ENCODE measurements at regions of chr1 and their contacts with region 1.

Region 1: GRCh38 chr1:151146412-151147140 is at the start of gene SEMA6C:
- DNase-seq: peak; percentile 97 to 98
- ATAC-seq: peak; percentile 52 to 66
- H3K4me3 ChIP-seq: peak within 1 kb of the TSS; percentile 89 to 97 (median 92)
- H3K27ac ChIP-seq: peak within 1 kb of the TSS; percentile 95 to 99 (median 98)
- H3K4me1 ChIP-seq: peaks cover 40 to 48% of the 10 kb centered on the region in 2 donors
- H3K27me3 ChIP-seq: no peaks in the 10 kb centered on the region
- CTCF ChIP-seq: peak in 1 of 5 experiments; percentile 8
- POLR2A ChIP-seq: peak; percentile 97 to 98
- total RNA-seq, gene SEMA6C: 51.5 to 121 (median 108) TPM

Region 2: DNA sequence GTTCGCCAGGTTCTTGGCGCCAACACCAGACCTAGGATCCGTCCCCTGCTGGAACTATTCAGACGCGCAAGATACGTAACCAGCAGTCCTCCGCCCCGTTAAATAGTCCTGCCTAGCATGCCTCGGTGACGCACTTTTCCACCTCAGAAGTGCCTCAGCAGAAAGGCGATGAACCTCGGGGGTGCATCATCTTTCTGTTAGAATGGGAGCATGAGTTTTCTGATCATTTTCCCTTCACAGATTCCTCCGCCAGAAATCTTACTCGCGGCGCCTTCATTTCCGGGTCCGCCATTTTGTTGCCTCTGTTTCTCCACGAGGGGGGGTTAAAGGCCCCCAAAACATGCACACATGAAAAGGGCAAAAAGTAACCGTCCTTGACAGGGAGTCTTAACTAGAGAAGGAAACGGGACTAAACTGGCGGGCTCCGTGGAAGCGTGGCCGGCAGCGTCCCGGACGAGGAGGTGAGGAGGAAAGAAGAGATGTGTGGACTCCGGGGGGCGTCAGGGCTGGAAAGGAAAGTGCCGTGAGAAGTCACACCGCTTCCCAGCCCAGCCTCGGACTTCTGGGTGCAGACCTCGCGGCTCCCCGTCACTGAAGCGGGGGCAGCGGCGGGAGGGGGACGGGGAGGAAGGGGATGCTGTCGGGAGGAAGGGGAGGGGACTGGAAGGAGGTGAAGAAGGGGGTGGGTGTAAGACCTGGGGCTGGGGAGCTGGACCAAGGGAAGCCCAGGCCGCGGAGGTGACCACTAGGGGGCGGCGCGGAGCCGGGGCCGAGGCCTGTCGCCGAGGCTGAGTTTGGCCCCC is 75.9 kb before region 1 on chr1 and contains the start of gene GABPB2:
- in situ Hi-C with region 1: no loop called
- intact Hi-C with region 1: loop called (anchors 2 kb)
- DNase-seq: peak; percentile 88 to 94
- ATAC-seq: peak; percentile 91
- H3K4me3 ChIP-seq: peak within 1 kb of the TSS; percentile 85 to 96 (median 92)
- H3K27ac ChIP-seq: peak within 1 kb of the TSS; percentile 94 to 99 (median 98)
- H3K4me1 ChIP-seq: peaks cover 9 to 19% of the 10 kb centered on the region in 2 donors
- H3K27me3 ChIP-seq: no peaks in the 10 kb centered on the region
- CTCF ChIP-seq: peak; percentile 57 to 94 (median 90)
- POLR2A ChIP-seq: peak; percentile 43 to 50
- total RNA-seq, gene GABPB2: 11.9 to 20.5 (median 17.9) TPM

Region 3: DNA sequence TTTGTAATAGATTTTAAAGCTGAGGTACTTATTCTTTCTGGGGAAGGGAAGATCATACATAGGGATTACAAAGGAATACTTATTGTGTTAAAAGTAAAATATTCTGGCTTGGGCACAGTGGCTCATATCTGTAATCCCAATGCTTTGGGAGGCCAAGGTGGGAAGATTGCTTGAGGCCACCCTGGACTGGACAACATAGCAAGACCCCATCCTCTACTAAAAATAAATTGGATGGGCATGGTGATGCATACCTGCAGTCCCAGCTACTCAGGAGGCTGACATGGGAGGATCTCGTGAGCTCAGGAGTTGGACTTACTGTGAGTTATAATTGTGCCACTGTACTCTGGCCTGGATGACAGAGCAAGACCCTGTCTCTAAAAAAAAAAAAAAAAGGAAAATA is 48.5 kb before region 1 on chr1:
- in situ Hi-C with region 1: loop called in 2 of 4 experiments (anchors 5 to 10 kb)
- intact Hi-C with region 1: no loop called
- DNase-seq: no peak
- ATAC-seq: no peak
- H3K4me3 ChIP-seq: no peak overlapping the region
- H3K27ac ChIP-seq: no peak overlapping the region
- H3K4me1 ChIP-seq: no peaks in the 10 kb centered on the region
- H3K27me3 ChIP-seq: no peaks in the 10 kb centered on the region
- CTCF ChIP-seq: no peak
- POLR2A ChIP-seq: no peak

Region 4: DNA sequence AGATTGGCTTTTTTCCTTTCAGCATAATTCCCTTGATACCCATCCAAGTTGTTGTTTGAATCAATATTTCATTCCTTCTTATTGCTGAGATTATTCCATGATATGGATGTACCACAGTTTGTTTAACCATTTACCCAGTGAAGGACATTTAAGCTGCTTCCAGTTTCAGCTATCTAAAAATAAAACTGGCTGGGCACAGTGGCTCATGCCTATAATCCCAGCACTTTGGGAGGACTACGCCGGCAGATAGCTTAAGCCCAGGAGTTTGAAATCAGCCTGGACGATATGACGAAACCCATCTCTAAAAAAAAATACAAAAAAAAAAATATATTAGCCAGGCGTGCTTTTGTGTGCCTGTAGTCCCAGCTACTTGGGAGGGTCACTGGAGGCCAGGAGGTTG is 32.7 kb before region 1 on chr1:
- in situ Hi-C with region 1: loop called in 1 of 4 experiments (anchors 10 kb)
- intact Hi-C with region 1: loop called (anchors 5 kb)
- DNase-seq: no peak
- ATAC-seq: peak; percentile 50 to 59
- H3K4me3 ChIP-seq: no peak overlapping the region
- H3K27ac ChIP-seq: peak overlapping the region in 2 of 4 donors; percentile 20 to 46
- H3K4me1 ChIP-seq: peaks cover 0 to 8% of the 10 kb centered on the region in 2 donors
- H3K27me3 ChIP-seq: no peaks in the 10 kb centered on the region
- CTCF ChIP-seq: no peak
- POLR2A ChIP-seq: no peak

Region 5: GRCh38 chr1:151165738-151166505 is 19.3 kb after region 1 on chr1 and contains the starts of genes LYSMD1 and SCNM1:
- in situ Hi-C with region 1: no loop called
- intact Hi-C with region 1: loop called (anchors 1 kb)
- DNase-seq: peak; percentile 97 to 98
- ATAC-seq: peak; percentile 81 to 85
- H3K4me3 ChIP-seq: peak within 1 kb of the TSS; percentile 82 to 97 (median 84)
- H3K27ac ChIP-seq: peak within 1 kb of the TSS; percentile 91 to 99 (median 91)
- H3K4me1 ChIP-seq: peaks cover 50 to 54% of the 10 kb centered on the region in 2 donors
- H3K27me3 ChIP-seq: no peaks in the 10 kb centered on the region
- CTCF ChIP-seq: peak in 3 of 5 experiments; percentile 11 to 69 (median 51)
- POLR2A ChIP-seq: peak; percentile 43 to 63
- total RNA-seq, gene LYSMD1: 11.4 to 14.6 (median 13.7) TPM
- total RNA-seq, gene SCNM1: 17.7 to 56.1 (median 35.6) TPM

Region 6: GRCh38 chr1:151594143-151594625 is 447.6 kb after region 1 on chr1:
- in situ Hi-C with region 1: no loop called
- intact Hi-C with region 1: no loop called
- DNase-seq: peak; percentile 50 to 70
- ATAC-seq: peak; percentile 65 to 81
- H3K4me3 ChIP-seq: no peak overlapping the region
- H3K27ac ChIP-seq: no peak overlapping the region
- H3K4me1 ChIP-seq: peaks cover 0 to 7% of the 10 kb centered on the region in 2 donors
- H3K27me3 ChIP-seq: no peaks in the 10 kb centered on the region
- CTCF ChIP-seq: peak; percentile 82 to 96 (median 84)
- POLR2A ChIP-seq: no peak